ENCODE measurements at regions of chr12 and their contacts with region 1.

Region 1: GRCh38 chr12:89156862-89157262 is 195.4 kb downstream of the DUSP6 start:
- DNase-seq: no peak
- ATAC-seq: peak in 1 of 4 donors; percentile 55
- H3K4me3 ChIP-seq: no peak overlapping the region
- H3K27ac ChIP-seq: peak overlapping the region in 4 of 12 donors; percentile 17 to 90 (median 34)
- H3K4me1 ChIP-seq: peaks cover 0 to 59% (median 6%) of the 10 kb centered on the region in 12 donors
- H3K27me3 ChIP-seq: no peaks in the 10 kb centered on the region
- CTCF ChIP-seq: no peak
- POLR2A ChIP-seq: no peak

Region 2: DNA sequence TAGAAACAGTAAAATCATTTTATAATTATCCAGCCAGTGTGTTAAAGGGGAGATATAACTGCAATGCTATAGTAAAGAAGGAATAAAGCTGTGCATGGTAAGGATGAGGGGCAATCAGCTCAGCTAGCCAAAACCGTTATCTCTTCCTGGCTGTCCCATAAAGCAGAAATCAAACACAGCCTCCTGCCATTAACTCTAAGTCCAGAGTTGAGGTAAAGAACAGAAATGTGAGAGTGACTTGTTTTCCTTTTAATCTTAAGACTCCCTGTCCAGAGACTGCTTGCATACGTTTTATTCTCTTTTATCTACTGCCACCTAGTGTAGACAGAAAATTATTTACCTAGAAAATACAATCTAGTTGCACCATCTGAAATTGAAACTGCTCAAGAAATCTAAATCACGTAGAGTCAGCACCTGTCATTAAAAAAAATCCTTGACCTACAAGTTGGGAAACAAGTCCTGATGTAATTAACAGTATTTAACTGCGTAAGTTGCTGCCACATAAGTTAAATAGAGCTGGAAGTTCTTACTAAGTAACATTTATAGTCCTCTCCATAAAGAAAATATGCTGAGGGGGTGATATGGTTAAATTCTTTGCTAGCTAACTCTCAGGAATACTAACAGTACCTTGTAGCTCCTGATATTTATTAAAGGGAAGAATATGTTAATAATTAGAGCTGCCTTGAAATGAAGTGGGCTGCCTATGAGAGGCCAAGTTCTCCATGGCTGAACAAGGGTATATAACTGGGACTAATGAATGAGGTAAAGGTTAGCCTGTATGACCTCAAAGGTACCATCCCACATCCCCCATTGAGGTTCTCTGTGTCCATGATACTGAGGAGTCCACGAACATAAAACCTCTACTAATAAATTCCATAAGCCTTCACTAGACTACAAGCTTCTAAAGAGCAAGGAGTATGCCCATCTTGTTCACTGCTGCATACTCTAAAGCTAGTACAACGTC is 305.1 kb after region 1 on chr12:
- intact Hi-C with region 1: loop called in 1 of 10 experiments (anchors 10 kb)
- DNase-seq: no peak
- ATAC-seq: peak; percentile 83 to 93 (median 87)
- H3K4me3 ChIP-seq: peak overlapping the region in 6 of 12 donors; percentile 8 to 35 (median 20)
- H3K27ac ChIP-seq: peak overlapping the region in 8 of 12 donors; percentile 16 to 72 (median 34)
- H3K4me1 ChIP-seq: peaks cover 0 to 16% (median 5%) of the 10 kb centered on the region in 12 donors
- H3K27me3 ChIP-seq: no peaks in the 10 kb centered on the region
- CTCF ChIP-seq: peak; percentile 42 to 76 (median 66)
- POLR2A ChIP-seq: no peak